ENCODE measurements at regions of chr16 and their contacts with region 1.

Region 1: GRCh38 chr16:19086322-19087199 is 19.1 kb downstream of the COQ7 start:
- DNase-seq: peak; percentile 92

Region 2: GRCh38 chr16:19113453-19114351 is 27.1 kb after region 1 on chr16 and contains the start of gene ITPRIPL2:
- CTCF ChIA-PET with region 1: no interaction called
- POLR2A ChIA-PET with region 1: no interaction called
- DNase-seq: peak; percentile 73

Region 3: GRCh38 chr16:19179546-19180490 is 93.3 kb after region 1 on chr16:
- CTCF ChIA-PET with region 1: interaction called, 24 read pairs
- POLR2A ChIA-PET with region 1: interaction called, 3 read pairs
- DNase-seq: peak; percentile 76

Region 4: GRCh38 chr16:19389246-19389645 is 302.7 kb after region 1 on chr16:
- CTCF ChIA-PET with region 1: interaction called, 11 read pairs
- POLR2A ChIA-PET with region 1: no interaction called
- DNase-seq: peak; percentile 35

Measured in HEK293T (cell line).